Lower leg skin (tissue), 4 donors: ENCODE measurements at regions of chr9 and their contacts with region 1.

Region 1: GRCh38 chr9:11086561-11086960 is 473.8 kb upstream of the PTPRD start:
- DNase-seq: no peak
- H3K4me3 ChIP-seq: no peak overlapping the region
- CTCF ChIP-seq: no peak
- POLR2A ChIP-seq: no peak

Region 2: GRCh38 chr9:10999646-11000045 is 86.9 kb before region 1 on chr9:
- intact Hi-C with region 1: no loop called
- DNase-seq: no peak
- H3K4me3 ChIP-seq: no peak overlapping the region
- CTCF ChIP-seq: no peak
- POLR2A ChIP-seq: no peak

Region 3: GRCh38 chr9:11016081-11016480 is 70.5 kb before region 1 on chr9:
- intact Hi-C with region 1: no loop called
- DNase-seq: no peak
- H3K4me3 ChIP-seq: no peak overlapping the region
- CTCF ChIP-seq: no peak
- POLR2A ChIP-seq: no peak

Region 4: DNA sequence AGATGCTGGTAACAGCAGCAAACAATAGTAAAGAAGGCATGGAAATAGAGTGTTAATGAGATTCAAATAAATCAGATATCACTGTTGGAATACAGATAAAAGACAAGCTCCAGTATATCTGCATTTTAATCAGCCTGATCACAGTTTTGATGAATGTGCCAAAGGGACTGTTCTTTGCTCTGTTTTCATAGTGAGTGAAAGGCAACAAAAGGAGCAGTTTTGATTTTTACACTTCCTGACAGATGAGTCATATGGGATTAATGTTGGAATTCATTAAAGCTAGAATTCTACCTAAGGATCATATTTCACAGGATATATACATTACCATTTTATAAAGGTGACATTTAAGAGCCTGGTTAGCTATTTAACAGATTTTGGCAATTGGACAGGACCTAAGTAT is 269.5 kb after region 1 on chr9:
- intact Hi-C with region 1: no loop called
- DNase-seq: no peak
- H3K4me3 ChIP-seq: no peak overlapping the region
- CTCF ChIP-seq: no peak
- POLR2A ChIP-seq: no peak

Region 5: DNA sequence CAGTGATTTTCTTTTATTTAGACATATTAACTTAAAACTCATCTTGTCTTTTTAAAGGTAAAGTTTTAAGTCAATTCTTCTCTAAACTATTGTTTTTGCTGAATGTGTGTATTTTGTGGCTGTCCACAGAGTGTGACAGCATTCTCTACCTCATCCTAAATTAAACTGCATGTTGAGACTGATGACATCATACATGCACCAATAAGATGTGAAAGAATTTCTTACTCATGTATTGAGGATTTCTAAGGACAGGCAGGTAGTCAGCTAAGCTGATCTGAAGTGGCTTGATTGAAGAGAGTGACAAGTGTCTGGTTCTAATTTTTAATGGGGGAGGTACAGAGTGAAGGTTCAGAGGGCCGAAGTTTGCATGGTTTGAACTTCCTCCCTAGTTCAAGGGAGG is 972.6 kb after region 1 on chr9:
- intact Hi-C with region 1: loop called (anchors 5 kb)
- DNase-seq: no peak
- H3K4me3 ChIP-seq: no peak overlapping the region
- CTCF ChIP-seq: no peak
- POLR2A ChIP-seq: no peak